CD4-positive, alpha-beta memory T cell (primary cell): ENCODE measurements at regions of chr7 and their contacts with region 1.

Region 1: DNA sequence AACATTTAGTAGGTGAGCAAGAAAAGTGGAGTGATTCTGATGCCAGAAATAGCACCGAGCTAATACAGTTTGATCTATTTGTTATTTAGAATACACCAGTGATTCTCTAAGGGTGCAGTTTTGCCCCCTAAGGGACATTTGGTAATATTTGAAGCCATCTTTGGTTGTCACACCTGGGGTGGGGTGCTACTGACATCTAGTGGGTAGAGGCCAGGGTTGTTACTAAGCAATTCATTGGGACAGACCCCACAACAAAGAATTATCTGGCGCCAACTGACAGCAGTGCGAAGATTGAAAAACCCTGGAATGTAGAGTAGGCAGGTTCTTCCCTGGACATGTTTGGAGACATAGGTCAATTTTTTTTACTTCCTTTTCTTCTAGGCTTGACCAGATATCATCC is 14.6 kb downstream of the PALS2 start:
- DNase-seq: peak; percentile 32 to 59 (median 49)
- H3K4me3 ChIP-seq: no peak overlapping the region
- H3K4me3 Mint-ChIP-seq: no peak overlapping the region
- H3K27ac ChIP-seq: no peak overlapping the region
- H3K27ac Mint-ChIP-seq: no peak overlapping the region
- H3K4me1 ChIP-seq: no peaks in the 10 kb centered on the region
- H3K4me1 Mint-ChIP-seq: peaks cover 5 to 12% (median 9%) of the 10 kb centered on the region in 4 donors
- H3K27me3 ChIP-seq: no peaks in the 10 kb centered on the region
- H3K27me3 Mint-ChIP-seq: peaks cover 0 to 3% of the 10 kb centered on the region in 2 donors

Region 2: GRCh38 chr7:24290004-24290641 is 297.7 kb before region 1 on chr7:
- CTCF ChIA-PET with region 1: interaction called, 3 read pairs
- POLR2A ChIA-PET with region 1: no interaction called
- intact Hi-C with region 1: loop called (anchors 2 kb)
- DNase-seq: peak in 4 of 5 donors; percentile 24 to 37 (median 32)
- H3K4me3 ChIP-seq: no peak overlapping the region
- H3K4me3 Mint-ChIP-seq: no peak overlapping the region
- H3K27ac ChIP-seq: no peak overlapping the region
- H3K27ac Mint-ChIP-seq: no peak overlapping the region
- H3K4me1 ChIP-seq: peaks cover 13% of the 10 kb centered on the region
- H3K4me1 Mint-ChIP-seq: peaks cover 6 to 13% (median 7%) of the 10 kb centered on the region in 4 donors
- H3K27me3 ChIP-seq: peaks cover 7% of the 10 kb centered on the region
- H3K27me3 Mint-ChIP-seq: peaks cover 23 to 25% of the 10 kb centered on the region in 2 donors

Region 3: DNA sequence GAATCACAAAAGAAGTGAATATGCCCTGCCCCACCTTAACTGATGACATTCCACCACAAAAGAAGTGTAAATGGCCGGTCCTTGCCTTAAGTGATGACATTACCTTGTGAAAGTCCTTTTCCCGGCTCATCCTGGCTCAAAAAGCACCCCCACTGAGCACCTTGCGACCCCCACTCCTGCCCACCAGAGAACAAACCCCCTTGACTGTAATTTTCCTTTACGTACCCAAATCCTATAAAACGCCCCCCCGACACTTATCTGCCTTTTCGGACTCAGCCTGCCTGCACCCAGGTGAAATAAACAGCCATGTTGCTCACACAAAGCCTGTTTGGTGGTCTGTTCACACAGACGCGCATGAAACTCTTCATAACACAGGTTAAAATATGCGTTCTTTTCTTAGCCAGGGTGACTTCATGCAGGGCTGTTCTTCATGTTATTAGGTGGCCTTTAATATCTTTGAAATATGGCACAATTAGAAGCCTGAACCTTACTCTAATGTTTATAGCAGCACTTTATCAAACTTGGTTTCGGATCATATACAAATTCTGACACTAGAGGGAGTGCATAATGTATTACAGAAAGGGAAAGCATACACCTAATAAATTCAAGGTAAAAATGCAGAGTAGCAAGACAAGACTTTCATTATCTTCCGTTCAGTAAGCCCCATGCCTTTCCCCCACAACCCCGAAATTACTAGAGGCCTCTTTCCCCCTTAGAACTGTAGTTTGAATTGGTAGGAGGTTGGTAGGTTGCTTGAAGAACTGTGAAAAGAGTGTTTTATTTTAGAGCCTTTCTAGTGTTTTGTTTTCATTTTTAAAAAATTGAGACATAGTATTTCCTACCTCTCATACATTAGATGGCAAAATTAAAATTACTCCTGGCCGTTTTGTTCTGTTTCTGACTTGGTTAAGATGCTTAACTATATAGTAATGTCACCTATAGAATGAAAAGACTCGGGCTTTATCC is 185.9 kb before region 1 on chr7:
- CTCF ChIA-PET with region 1: no interaction called
- POLR2A ChIA-PET with region 1: no interaction called
- intact Hi-C with region 1: loop called (anchors 1 kb)
- DNase-seq: peak in 4 of 5 donors; percentile 8 to 17 (median 12)
- H3K4me3 ChIP-seq: no peak overlapping the region
- H3K4me3 Mint-ChIP-seq: peak overlapping the region in 1 of 8 donors; percentile 26
- H3K27ac ChIP-seq: no peak overlapping the region
- H3K27ac Mint-ChIP-seq: no peak overlapping the region
- H3K4me1 ChIP-seq: peaks cover 9% of the 10 kb centered on the region
- H3K4me1 Mint-ChIP-seq: peaks cover 7 to 11% (median 8%) of the 10 kb centered on the region in 4 donors
- H3K27me3 ChIP-seq: no peaks in the 10 kb centered on the region
- H3K27me3 Mint-ChIP-seq: peaks cover 0 to 6% of the 10 kb centered on the region in 2 donors

Region 4: GRCh38 chr7:24501009-24501408 is 86.8 kb before region 1 on chr7:
- CTCF ChIA-PET with region 1: no interaction called
- POLR2A ChIA-PET with region 1: no interaction called
- intact Hi-C with region 1: no loop called
- DNase-seq: no peak
- H3K4me3 ChIP-seq: no peak overlapping the region
- H3K4me3 Mint-ChIP-seq: no peak overlapping the region
- H3K27ac ChIP-seq: no peak overlapping the region
- H3K27ac Mint-ChIP-seq: no peak overlapping the region
- H3K4me1 ChIP-seq: no peaks in the 10 kb centered on the region
- H3K4me1 Mint-ChIP-seq: no peaks in the 10 kb centered on the region
- H3K27me3 ChIP-seq: no peaks in the 10 kb centered on the region
- H3K27me3 Mint-ChIP-seq: peaks cover 3 to 5% of the 10 kb centered on the region in 2 donors